ENCODE measurements at regions of chr20 and their contacts with region 1.

Region 1: GRCh38 chr20:60057123-60057801 is 99.0 kb downstream of the CDH26 start:
- DNase-seq: peak; percentile 68 to 71 (median 70)
- H3K4me3 ChIP-seq: peak overlapping the region in 1 of 2 donors; percentile 53
- H3K4me3 Mint-ChIP-seq: peak overlapping the region; percentile 79 to 91 (median 85)
- H3K27ac ChIP-seq: peak overlapping the region; percentile 35
- H3K27ac Mint-ChIP-seq: peak overlapping the region; percentile 68 to 92 (median 90)
- H3K4me1 ChIP-seq: peaks cover 48% of the 10 kb centered on the region
- H3K4me1 Mint-ChIP-seq: peaks cover 48 to 81% (median 60%) of the 10 kb centered on the region in 4 donors
- H3K27me3 ChIP-seq: no peaks in the 10 kb centered on the region
- H3K27me3 Mint-ChIP-seq: no peaks in the 10 kb centered on the region

Region 2: GRCh38 chr20:59940174-59940971 is 116.9 kb before region 1 on chr20 and contains the starts of genes FAM217B and PPP1R3D:
- CTCF ChIA-PET with region 1: interaction called, 4 read pairs
- POLR2A ChIA-PET with region 1: interaction called, 20 read pairs
- intact Hi-C with region 1: loop called (anchors 2 kb)
- DNase-seq: peak; percentile 87 to 90 (median 89)
- H3K4me3 ChIP-seq: peak within 1 kb of the TSS; percentile 87 to 95
- H3K4me3 Mint-ChIP-seq: peak within 1 kb of the TSS; percentile 90 to 99 (median 97)
- H3K27ac ChIP-seq: peak within 1 kb of the TSS; percentile 87
- H3K27ac Mint-ChIP-seq: peak within 1 kb of the TSS; percentile 93 to 99 (median 97)
- H3K4me1 ChIP-seq: peaks cover 52% of the 10 kb centered on the region
- H3K4me1 Mint-ChIP-seq: peaks cover 34 to 60% (median 46%) of the 10 kb centered on the region in 4 donors
- H3K27me3 ChIP-seq: no peaks in the 10 kb centered on the region
- H3K27me3 Mint-ChIP-seq: no peaks in the 10 kb centered on the region
- total RNA-seq, gene FAM217B: 43.7 to 44.1 TPM
- total RNA-seq, gene PPP1R3D: 13.2 to 15.0 TPM

Region 3: DNA sequence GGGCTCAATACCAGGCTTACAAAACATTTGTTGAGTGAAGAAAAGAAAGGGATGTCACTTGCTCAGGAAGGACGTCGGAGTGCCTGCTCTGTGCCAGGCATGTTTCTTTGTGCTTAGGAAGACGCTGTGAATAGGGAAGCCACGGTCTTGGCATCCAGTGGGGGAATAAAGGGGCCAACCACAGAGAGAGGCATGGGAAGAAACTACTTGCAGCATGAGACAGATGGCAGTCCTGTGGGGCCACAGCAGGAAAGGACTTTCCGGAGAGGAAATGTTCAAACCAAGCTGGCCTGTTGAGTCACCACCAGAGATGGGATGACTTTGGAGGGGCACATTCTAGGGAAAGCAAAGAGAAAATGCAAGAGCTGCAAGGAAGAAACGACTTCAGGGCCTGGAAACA is 74.1 kb after region 1 on chr20:
- CTCF ChIA-PET with region 1: no interaction called
- POLR2A ChIA-PET with region 1: no interaction called
- intact Hi-C with region 1: no loop called
- DNase-seq: no peak
- H3K4me3 ChIP-seq: no peak overlapping the region
- H3K4me3 Mint-ChIP-seq: no peak overlapping the region
- H3K27ac ChIP-seq: no peak overlapping the region
- H3K27ac Mint-ChIP-seq: no peak overlapping the region
- H3K4me1 ChIP-seq: no peaks in the 10 kb centered on the region
- H3K4me1 Mint-ChIP-seq: no peaks in the 10 kb centered on the region
- H3K27me3 ChIP-seq: no peaks in the 10 kb centered on the region
- H3K27me3 Mint-ChIP-seq: peaks cover 1 to 4% of the 10 kb centered on the region in 2 donors

Region 4: GRCh38 chr20:60262967-60263603 is 205.8 kb after region 1 on chr20:
- CTCF ChIA-PET with region 1: interaction called, 65 read pairs
- POLR2A ChIA-PET with region 1: interaction called, 5 read pairs
- intact Hi-C with region 1: no loop called
- DNase-seq: peak in 4 of 5 donors; percentile 46 to 56 (median 50)
- H3K4me3 ChIP-seq: no peak overlapping the region
- H3K4me3 Mint-ChIP-seq: no peak overlapping the region
- H3K27ac ChIP-seq: no peak overlapping the region
- H3K27ac Mint-ChIP-seq: peak overlapping the region in 2 of 7 donors; percentile 19 to 38
- H3K4me1 ChIP-seq: peaks cover 18% of the 10 kb centered on the region
- H3K4me1 Mint-ChIP-seq: peaks cover 1 to 26% (median 14%) of the 10 kb centered on the region in 4 donors
- H3K27me3 ChIP-seq: no peaks in the 10 kb centered on the region
- H3K27me3 Mint-ChIP-seq: no peaks in the 10 kb centered on the region

Region 5: GRCh38 chr20:61230166-61230565 is 1172.9 kb after region 1 on chr20:
- CTCF ChIA-PET with region 1: interaction called, 24 read pairs
- POLR2A ChIA-PET with region 1: no interaction called
- intact Hi-C with region 1: no loop called
- DNase-seq: no peak
- H3K4me3 ChIP-seq: no peak overlapping the region
- H3K4me3 Mint-ChIP-seq: no peak overlapping the region
- H3K27ac ChIP-seq: no peak overlapping the region
- H3K27ac Mint-ChIP-seq: no peak overlapping the region
- H3K4me1 ChIP-seq: no peaks in the 10 kb centered on the region
- H3K4me1 Mint-ChIP-seq: peaks cover 1 to 4% (median 3%) of the 10 kb centered on the region in 4 donors
- H3K27me3 ChIP-seq: no peaks in the 10 kb centered on the region
- H3K27me3 Mint-ChIP-seq: peaks cover 4 to 12% of the 10 kb centered on the region in 2 donors

Region 6: GRCh38 chr20:61896058-61896961 is 1839.0 kb after region 1 on chr20:
- CTCF ChIA-PET with region 1: interaction called, 3 read pairs
- POLR2A ChIA-PET with region 1: no interaction called
- intact Hi-C with region 1: loop called (anchors 5 kb)
- DNase-seq: peak in 2 of 5 donors; percentile 4 to 8
- H3K4me3 ChIP-seq: no peak overlapping the region
- H3K4me3 Mint-ChIP-seq: no peak overlapping the region
- H3K27ac ChIP-seq: no peak overlapping the region
- H3K27ac Mint-ChIP-seq: no peak overlapping the region
- H3K4me1 ChIP-seq: no peaks in the 10 kb centered on the region
- H3K4me1 Mint-ChIP-seq: peaks cover 0 to 1% (median 0%) of the 10 kb centered on the region in 4 donors
- H3K27me3 ChIP-seq: no peaks in the 10 kb centered on the region
- H3K27me3 Mint-ChIP-seq: peaks cover 7 to 11% of the 10 kb centered on the region in 2 donors